ENCODE measurements at regions of chr6 and their contacts with region 1.

Region 1: DNA sequence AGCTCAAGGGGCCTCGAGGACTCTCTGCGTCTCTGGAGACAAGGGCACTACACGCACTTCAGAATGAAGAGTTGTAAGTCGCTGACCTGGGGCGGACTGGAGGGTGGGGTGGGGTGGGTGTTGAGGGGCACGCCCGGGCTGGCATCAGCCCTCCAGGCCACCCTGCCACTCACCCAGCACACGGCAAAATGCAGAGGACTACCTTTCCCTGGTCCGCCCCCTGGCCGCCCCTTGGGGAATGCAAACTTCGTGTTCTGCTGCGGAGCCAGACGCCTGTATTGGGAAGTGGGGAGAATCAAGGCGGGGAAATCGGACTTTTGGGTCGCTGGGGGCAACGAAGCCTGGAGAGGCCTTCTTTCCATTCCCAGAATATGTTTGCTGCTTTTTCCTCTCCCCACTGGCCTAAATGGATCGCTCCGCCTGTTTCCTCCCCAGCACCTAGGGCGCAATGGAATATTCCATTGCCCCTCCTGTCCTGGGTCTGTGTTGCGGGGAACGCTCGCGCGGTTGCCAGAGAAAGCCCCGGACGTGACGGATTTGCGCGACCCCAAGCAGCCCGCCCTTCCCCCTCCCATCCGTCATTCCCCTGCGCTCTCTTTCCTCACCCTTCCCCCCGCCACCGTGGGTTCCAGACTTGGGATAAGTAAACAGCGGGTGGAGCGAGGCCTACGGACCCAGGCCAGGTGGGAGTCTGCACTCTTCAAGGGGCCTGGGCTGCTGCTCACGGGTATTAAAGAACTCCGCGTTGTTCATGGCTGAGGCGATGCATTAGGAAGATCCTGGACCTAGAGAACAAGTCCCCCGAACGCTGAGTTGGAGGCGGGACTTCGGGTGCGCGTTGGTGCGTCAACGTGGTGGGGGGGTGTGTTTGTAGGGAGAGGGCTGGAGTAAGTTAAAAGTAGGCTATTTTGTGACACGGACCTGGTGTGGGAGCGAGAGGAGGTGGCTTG is at the start of gene PPT2:
- DNase-seq: peak; percentile 87
- H3K4me3 Mint-ChIP-seq: peak within 1 kb of the TSS; percentile 98
- H3K27ac Mint-ChIP-seq: peak within 1 kb of the TSS; percentile 79
- H3K4me1 Mint-ChIP-seq: peaks cover 35% of the 10 kb centered on the region
- H3K27me3 Mint-ChIP-seq: peaks cover 17% of the 10 kb centered on the region
- total RNA-seq, gene PPT2: 9.5 to 9.9 TPM

Region 2: DNA sequence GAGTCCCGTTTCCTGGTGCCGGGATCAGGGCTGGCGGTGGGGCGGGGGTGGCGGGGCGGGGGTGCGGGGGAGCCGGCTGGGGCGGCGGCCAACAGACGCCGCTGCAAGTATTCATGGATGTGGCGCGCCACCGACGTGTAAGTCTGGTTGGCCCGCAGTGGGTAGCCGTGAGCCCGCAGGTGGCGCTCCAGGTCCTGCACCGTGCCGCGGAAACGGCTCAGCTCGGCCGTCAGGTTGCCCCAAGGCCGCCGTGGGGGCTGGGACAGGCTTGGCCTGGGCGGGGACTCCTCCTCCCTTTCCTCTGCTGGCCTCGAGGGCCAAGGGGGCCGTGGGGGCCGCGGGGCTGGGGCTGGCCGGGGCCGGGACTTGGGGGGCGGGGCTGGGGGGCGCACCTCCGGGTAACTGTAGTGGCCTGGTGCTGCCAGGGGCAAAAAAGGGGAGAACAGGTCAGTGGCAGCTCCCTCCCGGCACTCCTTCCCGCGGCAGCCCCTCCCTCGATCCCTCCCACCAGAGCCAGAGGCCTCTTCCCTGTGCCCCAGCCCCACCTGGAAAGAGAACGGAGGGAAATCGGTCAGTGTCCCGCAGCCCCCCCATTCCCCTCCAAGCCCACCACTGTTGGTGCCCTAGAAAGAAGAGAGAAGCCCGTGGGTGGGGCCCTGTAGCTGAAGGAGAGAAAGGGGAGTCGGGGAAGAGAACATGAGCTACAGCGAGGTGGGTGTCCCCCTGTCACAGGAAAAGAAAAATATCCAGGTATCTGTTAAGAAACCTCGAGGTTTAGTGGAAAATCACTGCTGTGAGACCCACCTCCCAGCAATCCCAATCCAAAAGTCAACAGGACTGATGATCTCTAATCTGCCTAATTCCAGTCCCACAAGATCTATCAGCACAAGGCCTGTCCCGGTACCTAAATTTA is 66.0 kb before region 1 on chr6:
- CTCF ChIA-PET with region 1: interaction called, 3 read pairs
- POLR2A ChIA-PET with region 1: no interaction called
- intact Hi-C with region 1: loop called (anchors 1 kb)
- DNase-seq: peak; percentile 86
- H3K4me3 Mint-ChIP-seq: no peak overlapping the region
- H3K27ac Mint-ChIP-seq: no peak overlapping the region
- H3K4me1 Mint-ChIP-seq: peaks cover 12% of the 10 kb centered on the region
- H3K27me3 Mint-ChIP-seq: peaks cover 32% of the 10 kb centered on the region

Region 3: GRCh38 chr6:32118782-32119628 is 34.8 kb before region 1 on chr6:
- CTCF ChIA-PET with region 1: interaction called, 9 read pairs
- POLR2A ChIA-PET with region 1: no interaction called
- intact Hi-C with region 1: loop called (anchors 1 kb)
- DNase-seq: peak; percentile 81
- H3K4me3 Mint-ChIP-seq: no peak overlapping the region
- H3K27ac Mint-ChIP-seq: no peak overlapping the region
- H3K4me1 Mint-ChIP-seq: peaks cover 7% of the 10 kb centered on the region
- H3K27me3 Mint-ChIP-seq: no peaks in the 10 kb centered on the region

Measured in activated CD4-positive, alpha-beta memory T cell treated with anti-CD3 and anti-CD28 coated beads for 36 hours (primary cell).